ENCODE measurements at regions of chr3 and their contacts with region 1.

Region 1: GRCh38 chr3:171548917-171549316 is 88.7 kb upstream of the TNIK start:
- DNase-seq: no peak
- ATAC-seq: no peak
- H3K4me3 ChIP-seq: no peak overlapping the region
- H3K27ac ChIP-seq: no peak overlapping the region
- H3K4me1 ChIP-seq: peaks cover 0 to 13% (median 0%) of the 10 kb centered on the region in 12 donors
- H3K27me3 ChIP-seq: no peaks in the 10 kb centered on the region
- CTCF ChIP-seq: no peak
- POLR2A ChIP-seq: no peak

Region 2: DNA sequence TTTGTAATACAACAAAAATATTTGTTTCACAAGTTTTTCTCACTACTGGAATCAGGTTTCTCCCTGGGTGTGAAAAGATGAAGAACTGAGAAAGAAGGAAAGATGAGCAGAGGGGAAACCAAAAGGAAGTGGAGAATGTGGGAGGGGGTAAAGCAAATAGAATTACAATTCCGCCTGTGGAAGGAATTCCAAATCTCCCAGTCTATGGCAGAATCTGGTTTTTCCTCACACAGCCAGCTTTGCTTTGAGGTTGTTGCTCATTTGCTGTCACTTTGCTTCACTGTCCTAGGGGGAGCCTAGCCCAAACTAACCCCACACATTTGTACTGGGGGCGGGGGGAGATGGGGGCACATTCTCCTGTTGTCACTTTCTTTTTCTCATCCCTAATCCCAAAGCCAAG is 722.9 kb before region 1 on chr3:
- intact Hi-C with region 1: no loop called
- DNase-seq: no peak
- ATAC-seq: no peak
- H3K4me3 ChIP-seq: no peak overlapping the region
- H3K27ac ChIP-seq: no peak overlapping the region
- H3K4me1 ChIP-seq: no peaks in the 10 kb centered on the region
- H3K27me3 ChIP-seq: peaks cover 0 to 6% (median 0%) of the 10 kb centered on the region in 9 donors
- CTCF ChIP-seq: no peak
- POLR2A ChIP-seq: no peak

Region 3: GRCh38 chr3:171480526-171480925 is 68.4 kb before region 1 on chr3:
- intact Hi-C with region 1: loop called in 1 of 10 experiments (anchors 10 kb)
- DNase-seq: no peak
- ATAC-seq: no peak
- H3K4me3 ChIP-seq: no peak overlapping the region
- H3K27ac ChIP-seq: no peak overlapping the region
- H3K4me1 ChIP-seq: peaks cover 0 to 6% (median 0%) of the 10 kb centered on the region in 12 donors
- H3K27me3 ChIP-seq: no peaks in the 10 kb centered on the region
- CTCF ChIP-seq: no peak
- POLR2A ChIP-seq: no peak